K562 (cell line): ENCODE measurements at regions of chr2 and their contacts with region 1.

Region 1: GRCh38 chr2:17830053-17831034 is 14.1 kb downstream of the MSGN1 start:
- DNase-seq: peak; percentile 69 to 74 (median 72)
- ATAC-seq: peak; percentile 99
- H3K4me3 ChIP-seq: no peak overlapping the region
- H3K27ac ChIP-seq: no peak overlapping the region
- H3K4me1 ChIP-seq: peaks cover 0 to 6% of the 10 kb centered on the region in 2 experiments; a peak in 2 of 5 replicates
- H3K27me3 ChIP-seq: peaks cover 8 to 11% of the 10 kb centered on the region in 2 experiments; a peak in 3 of 5 replicates
- CTCF ChIP-seq: peak; percentile 89 to 93 (median 89)
- EP300 ChIP-seq: no peak
- POLR2A ChIP-seq: no peak
- RAD21 ChIP-seq: peak; percentile 40 to 70

Region 2: GRCh38 chr2:17719562-17720371 is 110.6 kb before region 1 on chr2:
- CTCF ChIA-PET with region 1: no interaction called
- POLR2A ChIA-PET with region 1: no interaction called
- in situ Hi-C with region 1: no loop called
- intact Hi-C with region 1: loop called (anchors 2 kb)
- DNase-seq: peak; percentile 18 to 31 (median 26)
- ATAC-seq: peak; percentile 75
- H3K4me3 ChIP-seq: no peak overlapping the region
- H3K27ac ChIP-seq: no peak overlapping the region; the same call in 2 of the 3 replicates
- H3K4me1 ChIP-seq: peaks cover 3 to 15% of the 10 kb centered on the region in 2 experiments; a peak in 3 of 5 replicates
- H3K27me3 ChIP-seq: no peaks in the 10 kb centered on the region
- CTCF ChIP-seq: peak in 2 of 3 experiments; percentile 60 to 77; a peak in 4 of 6 replicates
- EP300 ChIP-seq: no peak
- POLR2A ChIP-seq: no peak
- RAD21 ChIP-seq: peak; percentile 29 to 51; a peak in 3 of 4 replicates

Region 3: DNA sequence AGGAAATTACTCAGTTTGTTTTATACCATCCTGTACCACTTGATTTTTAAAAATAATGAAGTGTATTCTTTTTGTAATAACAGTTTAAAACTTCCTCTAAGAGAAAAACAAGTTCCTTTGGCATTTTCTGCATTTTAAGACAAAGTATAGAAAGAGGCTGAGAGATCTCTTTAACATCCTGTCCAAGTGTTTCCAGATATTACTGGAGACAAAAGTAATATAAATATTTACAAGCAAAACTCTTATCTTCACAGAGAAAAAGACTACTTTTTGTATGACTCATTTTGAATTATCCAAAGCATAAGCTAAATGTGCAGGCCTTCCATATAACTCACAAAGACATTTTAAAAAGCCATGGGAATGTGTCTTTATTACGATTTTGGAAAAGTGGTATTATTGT is 509.0 kb after region 1 on chr2:
- CTCF ChIA-PET with region 1: no interaction called
- POLR2A ChIA-PET with region 1: no interaction called
- in situ Hi-C with region 1: no loop called
- intact Hi-C with region 1: no loop called
- DNase-seq: no peak
- ATAC-seq: no peak
- H3K4me3 ChIP-seq: no peak overlapping the region
- H3K27ac ChIP-seq: no peak overlapping the region
- H3K4me1 ChIP-seq: no peaks in the 10 kb centered on the region
- H3K27me3 ChIP-seq: no peaks in the 10 kb centered on the region
- CTCF ChIP-seq: no peak
- EP300 ChIP-seq: no peak
- POLR2A ChIP-seq: no peak
- RAD21 ChIP-seq: no peak